Activated T-helper 1 cell treated with anti-CD3 and anti-CD28 coated beads, Interleukin-12 subunit alpha, Interleukin-12 subunit beta, Interleukin-2, Interleukin-4 antibody, amounts not matched to agents 30 ng/mL and 10 ng/mL and 1 ng/mL, durations not matched to agents 14 hours and 24 hours and 36 hours (primary cell): ENCODE measurements at regions of chr7 and their contacts with region 1.

Region 1: GRCh38 chr7:106865130-106866041 is at the start of gene PIK3CG:
- DNase-seq: peak; percentile 22
- H3K4me3 Mint-ChIP-seq: peak within 1 kb of the TSS; percentile 96
- H3K27ac Mint-ChIP-seq: peak within 1 kb of the TSS; percentile 90
- H3K4me1 Mint-ChIP-seq: peaks cover 55% of the 10 kb centered on the region
- H3K27me3 Mint-ChIP-seq: no peaks in the 10 kb centered on the region
- total RNA-seq, gene PIK3CG: 38.7 and 39.3 TPM in 2 replicates

Region 2: DNA sequence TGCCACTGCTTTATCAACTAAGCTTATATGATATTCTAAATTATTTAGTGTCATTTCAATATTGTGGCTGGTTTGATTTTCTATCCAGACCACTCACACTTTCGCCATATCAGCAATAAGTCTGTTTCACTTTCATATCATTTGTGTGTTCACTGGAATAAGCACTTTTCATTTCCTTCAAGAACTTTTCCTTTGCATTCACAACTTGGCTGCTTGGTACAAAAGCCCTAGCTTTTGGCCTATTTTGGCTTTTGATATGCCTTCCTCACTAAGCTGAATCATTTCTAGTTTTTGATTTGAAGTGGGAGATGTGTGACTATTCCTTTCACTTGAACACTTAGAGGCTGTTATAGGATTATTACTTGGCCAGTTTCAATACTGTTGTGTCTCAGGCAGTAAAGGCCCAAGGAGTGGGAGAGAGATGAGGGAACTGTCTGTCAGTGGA is 459.7 kb before region 1 on chr7:
- intact Hi-C with region 1: loop called (anchors 2 kb)
- DNase-seq: no peak
- H3K4me3 Mint-ChIP-seq: no peak overlapping the region
- H3K27ac Mint-ChIP-seq: peak overlapping the region; percentile 30
- H3K4me1 Mint-ChIP-seq: peaks cover 23% of the 10 kb centered on the region
- H3K27me3 Mint-ChIP-seq: peaks cover 23% of the 10 kb centered on the region

Region 3: DNA sequence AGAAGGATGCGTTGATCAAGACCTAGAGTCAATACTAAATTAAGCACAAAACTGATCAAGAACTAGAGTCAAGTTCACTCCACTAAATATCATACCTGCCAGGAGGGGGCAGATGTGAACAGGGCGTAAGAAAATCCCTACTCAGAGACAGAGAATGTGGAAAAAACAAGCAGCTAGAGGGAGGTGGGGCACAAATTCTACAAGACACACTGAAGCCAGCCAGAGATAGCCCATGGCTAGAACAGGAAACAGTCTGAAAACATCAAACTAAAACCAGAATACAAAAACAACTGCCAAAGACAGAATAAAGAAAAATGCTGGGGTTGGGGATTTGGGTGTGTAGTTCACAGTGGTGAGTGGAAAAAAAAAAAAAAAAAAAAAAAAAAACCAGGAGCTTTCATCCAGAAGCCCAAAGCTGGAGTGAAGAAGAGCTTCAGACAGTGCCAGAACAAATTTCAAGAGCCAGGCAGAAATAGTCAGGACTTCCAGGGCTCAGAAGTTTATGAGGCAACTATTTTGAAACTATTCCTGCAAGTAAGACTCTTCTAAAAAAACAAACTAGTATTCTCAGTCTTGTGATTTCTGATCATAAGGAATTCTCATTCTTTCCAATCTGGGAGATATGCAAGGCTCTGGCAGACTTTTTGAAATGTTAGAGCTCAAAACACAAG is 322.7 kb before region 1 on chr7:
- intact Hi-C with region 1: loop called (anchors 10 kb)
- DNase-seq: no peak
- H3K4me3 Mint-ChIP-seq: no peak overlapping the region
- H3K27ac Mint-ChIP-seq: no peak overlapping the region
- H3K4me1 Mint-ChIP-seq: peaks cover 12% of the 10 kb centered on the region
- H3K27me3 Mint-ChIP-seq: no peaks in the 10 kb centered on the region

Region 4: DNA sequence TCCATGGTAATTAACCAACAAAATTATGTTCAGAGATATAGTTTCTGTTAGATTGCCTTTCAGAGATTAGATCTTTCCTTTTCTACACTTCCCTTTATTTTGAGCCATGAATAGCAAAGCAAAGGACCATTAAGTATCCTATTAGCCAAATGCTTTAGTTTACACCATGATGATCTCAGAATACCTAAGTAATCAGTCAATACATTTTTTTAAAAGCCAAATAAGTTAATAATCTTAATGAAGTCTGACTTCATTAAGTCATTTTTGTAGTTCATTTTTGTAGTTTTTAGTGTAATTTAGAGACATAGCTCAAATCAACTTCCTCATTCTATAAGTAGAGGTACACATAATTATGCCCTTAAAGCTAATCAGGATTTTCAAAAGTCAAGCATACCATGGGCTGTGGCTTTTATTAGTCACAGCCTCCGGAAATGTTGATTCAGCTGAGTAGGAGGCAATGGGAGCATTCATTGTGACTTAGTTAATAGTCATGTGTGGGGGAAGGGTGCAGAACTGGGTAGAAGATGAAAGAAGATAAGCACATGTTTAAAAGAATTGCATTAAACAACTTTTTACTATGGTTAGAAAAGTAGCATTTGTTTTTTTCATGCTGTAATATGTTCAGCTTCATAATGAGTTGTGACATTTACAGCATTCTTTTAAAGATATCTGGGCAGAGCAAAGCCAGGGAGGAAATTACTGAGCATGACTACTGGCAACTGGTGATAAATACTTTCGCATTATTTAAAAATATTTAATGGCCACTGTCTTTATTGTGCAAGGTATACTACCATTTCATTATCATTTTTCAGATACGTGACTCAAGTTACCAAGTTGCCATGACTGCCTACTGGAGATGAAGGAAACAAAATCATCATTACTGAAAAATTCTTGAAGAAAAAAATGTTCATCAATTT is 147.2 kb before region 1 on chr7:
- intact Hi-C with region 1: loop called (anchors 1 kb)
- DNase-seq: peak; percentile 37
- H3K4me3 Mint-ChIP-seq: no peak overlapping the region
- H3K27ac Mint-ChIP-seq: no peak overlapping the region
- H3K4me1 Mint-ChIP-seq: peaks cover 11% of the 10 kb centered on the region
- H3K27me3 Mint-ChIP-seq: no peaks in the 10 kb centered on the region

Region 5: GRCh38 chr7:106887421-106887820 is 22.0 kb after region 1 on chr7:
- intact Hi-C with region 1: loop called (anchors 1 kb)
- DNase-seq: no peak
- H3K4me3 Mint-ChIP-seq: no peak overlapping the region
- H3K27ac Mint-ChIP-seq: peak overlapping the region; percentile 83
- H3K4me1 Mint-ChIP-seq: peaks cover 41% of the 10 kb centered on the region
- H3K27me3 Mint-ChIP-seq: no peaks in the 10 kb centered on the region

Region 6: GRCh38 chr7:107130487-107131225 is 265.3 kb after region 1 on chr7:
- intact Hi-C with region 1: loop called (anchors 2 kb)
- DNase-seq: no peak
- H3K4me3 Mint-ChIP-seq: no peak overlapping the region
- H3K27ac Mint-ChIP-seq: no peak overlapping the region
- H3K4me1 Mint-ChIP-seq: peaks cover 14% of the 10 kb centered on the region
- H3K27me3 Mint-ChIP-seq: peaks cover 10% of the 10 kb centered on the region

Region 7: GRCh38 chr7:107661081-107661864 is 795.9 kb after region 1 on chr7:
- intact Hi-C with region 1: loop called (anchors 10 kb)
- DNase-seq: peak; percentile 55
- H3K4me3 Mint-ChIP-seq: peak overlapping the region; percentile 96
- H3K27ac Mint-ChIP-seq: peak overlapping the region; percentile 92
- H3K4me1 Mint-ChIP-seq: peaks cover 40% of the 10 kb centered on the region
- H3K27me3 Mint-ChIP-seq: peaks cover 3% of the 10 kb centered on the region